ENCODE measurements at regions of chr19 and their contacts with region 1.

Region 1: GRCh38 chr19:16041299-16041990 is 34.9 kb upstream of the TPM4 start:
- DNase-seq: peak; percentile 71 to 89
- H3K4me3 ChIP-seq: no peak overlapping the region; the same call in 1 of the 2 replicates
- H3K4me3 Mint-ChIP-seq: peak overlapping the region; percentile 50
- H3K27ac Mint-ChIP-seq: no peak overlapping the region
- H3K4me1 ChIP-seq: no peaks in the 10 kb centered on the region; the same call in 1 of the 2 replicates
- H3K4me1 Mint-ChIP-seq: no peaks in the 10 kb centered on the region
- H3K27me3 ChIP-seq: no peaks in the 10 kb centered on the region
- H3K27me3 Mint-ChIP-seq: no peaks in the 10 kb centered on the region
- CTCF ChIP-seq: peak; percentile 88 to 96

Region 2: DNA sequence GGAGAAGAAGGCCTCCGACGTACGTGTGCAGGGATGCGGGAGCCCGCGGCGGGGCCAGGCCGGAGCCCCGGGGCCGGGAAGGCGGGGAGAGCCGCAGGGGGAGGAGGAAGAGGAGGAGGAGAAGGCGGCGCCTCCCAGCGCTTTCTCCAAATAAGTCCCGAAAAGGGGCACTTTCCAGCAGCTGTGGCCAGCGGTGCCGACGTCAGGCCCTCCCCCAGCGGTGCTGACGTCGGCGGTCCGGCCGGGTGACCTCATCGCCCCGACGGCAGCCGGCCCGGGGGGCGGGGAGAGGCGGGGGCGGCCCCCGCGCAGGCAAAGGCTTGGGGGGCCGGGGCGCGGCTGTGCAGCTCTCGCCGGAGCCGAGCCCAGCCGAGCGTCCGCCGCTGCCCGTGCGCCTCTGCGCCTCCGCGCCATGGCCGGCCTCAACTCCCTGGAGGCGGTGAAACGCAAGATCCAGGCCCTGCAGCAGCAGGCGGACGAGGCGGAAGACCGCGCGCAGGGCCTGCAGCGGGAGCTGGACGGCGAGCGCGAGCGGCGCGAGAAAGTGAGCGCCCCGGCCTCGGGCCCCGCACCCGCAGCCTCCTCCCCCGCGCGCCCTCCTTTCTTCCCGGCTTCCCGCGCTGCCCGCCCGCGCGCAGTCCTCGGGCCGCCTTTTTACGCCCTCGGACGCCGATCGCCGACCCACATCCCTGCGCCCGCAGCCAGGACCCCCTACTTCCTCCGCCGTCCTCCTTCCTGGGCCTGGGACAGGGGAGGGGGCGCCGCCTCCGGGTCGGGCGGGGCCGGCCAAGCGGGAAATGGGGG is 34.9 kb after region 1 on chr19 and contains the start of gene TPM4:
- CTCF ChIA-PET with region 1: interaction called, 14 read pairs
- POLR2A ChIA-PET with region 1: no interaction called
- intact Hi-C with region 1: no loop called
- DNase-seq: peak; percentile 89 to 91
- H3K4me3 ChIP-seq: peak within 1 kb of the TSS; percentile 86
- H3K4me3 Mint-ChIP-seq: peak within 1 kb of the TSS; percentile 82
- H3K27ac Mint-ChIP-seq: peak within 1 kb of the TSS; percentile 90
- H3K4me1 ChIP-seq: peaks cover 21% of the 10 kb centered on the region
- H3K4me1 Mint-ChIP-seq: peaks cover 18% of the 10 kb centered on the region
- H3K27me3 ChIP-seq: no peaks in the 10 kb centered on the region
- H3K27me3 Mint-ChIP-seq: no peaks in the 10 kb centered on the region
- CTCF ChIP-seq: no peak
- total RNA-seq, gene TPM4: 368 and 392 TPM in 2 replicates

Region 3: GRCh38 chr19:16382775-16383543 is 341.5 kb after region 1 on chr19:
- CTCF ChIA-PET with region 1: interaction called, 4 read pairs
- POLR2A ChIA-PET with region 1: no interaction called
- intact Hi-C with region 1: loop called (anchors 10 kb)
- DNase-seq: peak; percentile 74 to 75
- H3K4me3 ChIP-seq: no peak overlapping the region
- H3K4me3 Mint-ChIP-seq: no peak overlapping the region
- H3K27ac Mint-ChIP-seq: no peak overlapping the region
- H3K4me1 ChIP-seq: no peaks in the 10 kb centered on the region
- H3K4me1 Mint-ChIP-seq: no peaks in the 10 kb centered on the region
- H3K27me3 ChIP-seq: no peaks in the 10 kb centered on the region
- H3K27me3 Mint-ChIP-seq: no peaks in the 10 kb centered on the region
- CTCF ChIP-seq: peak; percentile 74